Cardiac septum (tissue), 1 donor: ENCODE measurements at regions of chr10 and their contacts with region 1.

Region 1: GRCh38 chr10:71957546-71958275 is 6.5 kb upstream of the CHST3 start:
- DNase-seq: no peak

Region 2: GRCh38 chr10:71899665-71900412 is 57.9 kb before region 1 on chr10:
- intact Hi-C with region 1: loop called (anchors 5 kb)
- DNase-seq: no peak

Region 3: DNA sequence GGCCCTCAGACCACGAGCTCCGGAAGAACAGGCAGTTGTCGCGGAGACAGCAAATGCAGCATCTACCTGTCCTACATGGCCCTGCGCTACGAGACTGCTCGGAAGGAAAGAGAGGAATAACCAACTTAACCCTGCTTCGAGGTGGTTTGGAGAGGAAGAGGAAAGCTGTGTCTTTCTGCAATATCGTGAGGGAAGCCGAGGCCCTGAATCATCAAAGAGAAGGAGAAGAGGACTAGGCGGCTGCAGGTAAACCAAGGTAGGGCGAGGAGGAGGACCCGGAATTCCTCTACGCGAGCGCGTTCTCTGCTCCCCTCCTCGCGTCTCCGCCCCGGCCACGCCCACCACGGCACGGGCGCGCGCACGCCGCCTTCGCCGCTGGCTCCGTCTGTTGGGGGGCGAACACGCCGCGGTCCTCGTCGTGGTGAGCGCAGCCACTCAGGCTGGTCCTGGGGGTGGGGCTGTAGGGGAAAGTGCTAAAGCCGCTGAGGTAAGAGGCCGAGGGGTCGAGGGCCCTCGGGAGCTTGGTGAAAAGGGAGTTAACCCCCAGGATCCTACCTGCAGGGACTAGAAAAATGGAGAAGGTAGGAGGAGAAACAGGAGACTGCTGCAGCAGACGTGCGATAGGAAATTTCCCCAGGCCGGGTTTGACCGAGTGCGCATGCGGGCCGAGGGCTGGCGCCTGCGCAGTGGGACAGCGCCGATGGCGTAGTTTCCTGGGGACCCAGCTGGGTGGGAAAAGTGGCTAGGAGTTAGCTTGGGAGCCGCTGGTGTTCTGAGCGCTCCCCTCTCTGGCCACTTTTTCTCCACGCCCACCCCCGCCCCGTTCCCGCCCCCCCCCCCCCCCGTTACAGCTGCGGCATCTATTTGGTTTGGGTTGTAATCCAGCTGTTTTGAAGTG is 258.2 kb after region 1 on chr10 and contains the starts of genes ANAPC16 and ASCC1:
- intact Hi-C with region 1: loop called (anchors 10 kb)
- DNase-seq: peak; percentile 95
- total RNA-seq, gene ANAPC16: 171 TPM
- total RNA-seq, gene ASCC1: 21.2 TPM